BJ (cell line): ENCODE measurements at regions of chr2 and their contacts with region 1.

Region 1: DNA sequence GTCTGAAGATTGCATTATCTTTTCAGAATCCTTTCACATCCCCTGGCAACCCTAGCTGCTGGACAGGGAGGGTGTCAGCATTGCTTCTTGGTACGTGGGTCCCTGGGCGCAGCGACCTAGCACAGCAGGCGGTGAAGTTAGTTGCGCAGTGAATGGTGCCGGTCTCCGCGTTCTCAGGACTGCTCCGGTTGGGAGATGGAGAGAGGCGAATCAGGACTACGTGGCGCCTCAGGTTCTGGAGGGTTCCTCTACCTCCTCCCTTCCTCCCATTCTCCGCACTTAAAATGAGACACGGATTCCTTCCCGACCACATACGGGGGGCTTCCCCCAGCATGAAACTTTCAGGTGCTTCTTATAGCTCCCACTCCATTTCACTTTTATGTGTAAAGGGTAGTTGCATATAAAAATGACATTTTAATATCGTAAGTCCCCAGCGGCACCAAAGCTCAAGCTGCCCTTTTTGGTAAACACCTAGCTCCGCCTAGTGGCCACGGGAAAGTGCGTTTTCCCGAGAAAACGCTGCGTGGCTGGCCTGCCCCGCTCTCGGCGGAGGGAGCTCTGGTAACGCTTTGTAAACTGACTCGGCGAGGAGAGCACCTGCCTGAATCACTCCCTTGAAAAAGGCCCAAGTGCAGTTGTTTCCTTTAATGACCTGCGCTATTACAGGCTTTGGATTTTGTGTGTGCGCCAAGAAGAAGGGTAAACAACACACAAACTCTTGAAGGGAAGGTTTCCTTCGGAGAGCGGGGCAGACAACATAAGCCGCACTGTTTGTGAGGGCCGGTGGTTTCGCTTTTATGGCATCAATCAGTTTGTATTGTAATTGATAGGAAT is 32.9 kb upstream of the INHBB start:
- DNase-seq: peak; percentile 22
- H3K4me3 ChIP-seq: peak overlapping the region; percentile 40
- H3K27me3 ChIP-seq: no peaks in the 10 kb centered on the region
- CTCF ChIP-seq: peak; percentile 95

Region 2: GRCh38 chr2:120174963-120175581 is 138.0 kb before region 1 on chr2:
- CTCF ChIA-PET with region 1: interaction called, 23 read pairs
- POLR2A ChIA-PET with region 1: interaction called, 5 read pairs
- DNase-seq: peak; percentile 2
- H3K4me3 ChIP-seq: no peak overlapping the region
- H3K27me3 ChIP-seq: no peaks in the 10 kb centered on the region; the same call in 1 of the 2 replicates
- CTCF ChIP-seq: peak; percentile 64

Region 3: DNA sequence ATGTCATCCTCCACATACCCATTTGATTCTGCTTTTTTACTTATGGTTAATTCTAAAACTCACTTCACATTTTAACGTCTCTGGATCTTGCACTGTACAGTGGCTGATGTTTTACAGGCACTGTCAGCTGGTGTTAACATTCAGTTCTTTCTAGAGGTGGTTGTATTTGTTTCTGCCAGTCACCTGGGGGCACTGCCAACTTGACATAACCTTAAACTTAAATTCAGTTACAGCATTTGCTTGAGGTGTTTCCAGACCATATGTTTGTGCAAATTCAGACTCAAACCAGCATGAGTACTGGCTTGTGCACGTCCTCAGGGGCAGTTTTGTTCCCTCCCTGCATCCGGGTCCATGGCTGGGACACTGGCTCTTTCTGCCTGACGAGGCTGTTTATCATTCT is 84.5 kb before region 1 on chr2:
- CTCF ChIA-PET with region 1: interaction called, 11 read pairs
- POLR2A ChIA-PET with region 1: interaction called, 5 read pairs
- DNase-seq: no peak
- H3K4me3 ChIP-seq: no peak overlapping the region
- H3K27me3 ChIP-seq: no peaks in the 10 kb centered on the region
- CTCF ChIP-seq: no peak

Region 4: GRCh38 chr2:120252225-120253021 is 60.7 kb before region 1 on chr2 and contains the start of gene RALB:
- CTCF ChIA-PET with region 1: interaction called, 14 read pairs
- POLR2A ChIA-PET with region 1: no interaction called
- DNase-seq: peak; percentile 92
- H3K4me3 ChIP-seq: peak within 1 kb of the TSS; percentile 85
- H3K27me3 ChIP-seq: no peaks in the 10 kb centered on the region
- CTCF ChIP-seq: no peak
- polyA plus RNA-seq, gene RALB: 33.3 and 60.7 TPM in 2 replicates

Region 5: GRCh38 chr2:120298173-120298835 is 14.8 kb before region 1 on chr2:
- CTCF ChIA-PET with region 1: interaction called, 40 read pairs
- POLR2A ChIA-PET with region 1: interaction called, 5 read pairs
- DNase-seq: no peak
- H3K4me3 ChIP-seq: no peak overlapping the region
- H3K27me3 ChIP-seq: no peaks in the 10 kb centered on the region
- CTCF ChIP-seq: no peak

Region 6: GRCh38 chr2:120323214-120323613 is 10.1 kb after region 1 on chr2:
- CTCF ChIA-PET with region 1: interaction called, 16 read pairs
- POLR2A ChIA-PET with region 1: no interaction called
- DNase-seq: no peak
- H3K4me3 ChIP-seq: no peak overlapping the region
- H3K27me3 ChIP-seq: peaks cover 15% of the 10 kb centered on the region
- CTCF ChIP-seq: no peak

Region 7: DNA sequence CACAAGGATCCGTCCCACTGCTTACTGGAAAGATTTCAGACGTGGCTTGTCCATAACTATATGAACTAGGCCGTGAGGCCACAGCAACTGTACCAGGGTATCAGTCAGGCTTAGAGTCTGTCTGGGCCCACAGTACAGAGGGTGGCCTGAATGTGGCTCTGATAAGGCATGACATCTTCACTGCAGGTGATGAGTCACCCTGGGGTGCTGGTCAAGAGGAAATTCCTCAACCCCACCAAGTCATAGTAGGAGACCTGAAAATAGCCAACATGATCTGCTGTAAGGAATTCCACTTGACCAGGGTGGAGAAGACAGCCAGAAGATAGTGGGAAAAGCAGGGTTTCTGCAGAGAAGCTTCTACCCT is 140.5 kb after region 1 on chr2:
- CTCF ChIA-PET with region 1: no interaction called
- POLR2A ChIA-PET with region 1: no interaction called
- DNase-seq: no peak
- H3K4me3 ChIP-seq: no peak overlapping the region
- H3K27me3 ChIP-seq: no peaks in the 10 kb centered on the region
- CTCF ChIP-seq: no peak

Region 8: GRCh38 chr2:120476141-120476540 is 163.1 kb after region 1 on chr2:
- CTCF ChIA-PET with region 1: no interaction called
- POLR2A ChIA-PET with region 1: no interaction called
- DNase-seq: no peak
- H3K4me3 ChIP-seq: no peak overlapping the region
- H3K27me3 ChIP-seq: no peaks in the 10 kb centered on the region; the same call in 1 of the 2 replicates
- CTCF ChIP-seq: no peak

Region 9: DNA sequence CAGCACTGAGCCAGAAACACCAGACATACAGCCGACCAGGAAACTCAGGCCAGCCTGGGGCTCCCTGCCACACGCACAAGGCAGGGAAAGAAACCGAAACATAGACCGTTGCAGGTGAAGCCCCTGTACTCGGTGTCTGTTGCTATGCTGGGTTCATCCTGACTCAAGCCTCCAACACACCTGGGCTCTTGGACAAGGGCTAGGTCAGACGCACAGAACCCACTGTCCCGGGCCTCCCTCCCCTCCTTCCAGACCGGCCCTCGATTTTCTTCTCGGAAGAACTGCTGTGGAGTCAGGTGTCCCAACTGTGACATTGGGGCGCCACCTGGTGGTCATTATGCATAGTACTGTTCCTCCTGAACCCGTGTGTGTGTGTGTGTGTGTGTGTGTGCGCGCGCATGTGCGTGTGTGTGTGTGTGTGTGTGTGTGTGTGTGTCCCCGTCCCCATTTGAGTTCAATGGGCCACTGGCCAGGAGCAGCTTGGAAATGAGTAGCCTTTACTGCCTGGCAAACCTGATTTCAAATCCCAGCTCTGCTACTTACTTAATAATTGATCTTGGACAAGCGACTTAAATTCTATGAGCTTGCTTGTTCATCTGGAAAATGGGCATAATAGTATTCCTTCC is 367.2 kb after region 1 on chr2:
- CTCF ChIA-PET with region 1: interaction called, 39 read pairs
- POLR2A ChIA-PET with region 1: no interaction called
- DNase-seq: no peak
- H3K4me3 ChIP-seq: no peak overlapping the region
- H3K27me3 ChIP-seq: no peaks in the 10 kb centered on the region; the same call in 1 of the 2 replicates
- CTCF ChIP-seq: peak; percentile 66